Activated naive CD4-positive, alpha-beta T cell treated with anti-CD3 and anti-CD28 coated beads for 36 hours (primary cell): ENCODE measurements at regions of chr12 and their contacts with region 1.

Region 1: GRCh38 chr12:110431957-110432587 is 18.1 kb downstream of the ARPC3 start:
- DNase-seq: peak; percentile 31
- H3K4me3 Mint-ChIP-seq: no peak overlapping the region
- H3K27ac Mint-ChIP-seq: peak overlapping the region; percentile 36
- H3K4me1 Mint-ChIP-seq: peaks cover 3% of the 10 kb centered on the region
- H3K27me3 Mint-ChIP-seq: no peaks in the 10 kb centered on the region

Region 2: DNA sequence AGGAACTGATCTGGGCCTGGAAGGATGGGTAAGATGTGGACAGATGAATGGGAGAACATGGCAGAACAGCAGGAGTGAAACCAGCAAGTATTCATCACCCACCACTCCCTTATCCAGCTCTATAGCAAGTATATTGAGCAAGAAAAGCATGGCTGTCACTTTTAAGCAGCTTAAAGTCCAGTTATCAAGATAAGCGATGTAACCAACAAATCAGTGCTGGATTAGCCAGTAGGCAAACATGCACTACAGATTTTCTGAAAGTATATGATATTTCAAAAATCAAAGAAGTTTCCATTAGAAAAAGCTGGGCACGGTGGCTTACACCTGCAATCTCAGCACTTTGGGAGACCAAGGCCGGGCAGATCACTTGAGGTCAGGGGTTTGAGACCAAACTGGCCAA is 204.9 kb before region 1 on chr12:
- CTCF ChIA-PET with region 1: no interaction called
- intact Hi-C with region 1: no loop called
- DNase-seq: no peak
- H3K4me3 Mint-ChIP-seq: no peak overlapping the region
- H3K27ac Mint-ChIP-seq: no peak overlapping the region
- H3K4me1 Mint-ChIP-seq: no peaks in the 10 kb centered on the region
- H3K27me3 Mint-ChIP-seq: peaks cover 4% of the 10 kb centered on the region

Region 3: GRCh38 chr12:110254971-110255540 is 177.0 kb before region 1 on chr12:
- CTCF ChIA-PET with region 1: interaction called, 12 read pairs
- intact Hi-C with region 1: no loop called
- DNase-seq: no peak
- H3K4me3 Mint-ChIP-seq: no peak overlapping the region
- H3K27ac Mint-ChIP-seq: no peak overlapping the region
- H3K4me1 Mint-ChIP-seq: no peaks in the 10 kb centered on the region
- H3K27me3 Mint-ChIP-seq: no peaks in the 10 kb centered on the region

Region 4: DNA sequence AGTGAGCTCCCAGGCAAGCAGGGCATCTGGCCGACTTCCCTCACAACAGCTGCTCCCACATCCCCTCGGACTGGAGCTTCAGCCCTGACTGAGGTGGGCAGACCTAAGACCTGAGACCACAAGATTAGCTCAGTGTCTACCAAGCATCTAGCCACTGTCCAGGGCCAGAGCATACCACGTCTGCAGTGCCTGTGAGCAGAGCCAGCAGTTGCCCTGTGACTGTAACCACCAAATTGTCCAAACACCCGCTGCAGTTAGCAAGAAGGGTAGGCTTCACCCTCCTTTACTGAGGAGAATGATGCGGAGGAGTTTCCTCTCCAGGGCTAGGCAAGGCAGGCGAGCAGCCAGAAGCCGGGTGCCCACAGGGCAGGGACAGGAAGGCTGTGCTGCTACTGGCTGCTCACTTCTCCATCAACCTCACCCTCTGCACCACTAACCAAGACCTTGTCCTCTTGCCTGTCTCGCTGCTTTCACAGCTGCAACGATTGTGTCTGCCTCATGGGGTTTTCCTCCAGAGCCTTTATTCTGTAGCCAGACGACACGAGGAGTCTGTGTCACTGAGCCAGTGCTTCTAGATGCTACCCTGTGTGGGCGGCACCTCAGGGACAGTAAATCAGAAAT is 82.4 kb before region 1 on chr12:
- CTCF ChIA-PET with region 1: interaction called, 30 read pairs
- intact Hi-C with region 1: no loop called
- DNase-seq: peak; percentile 78
- H3K4me3 Mint-ChIP-seq: no peak overlapping the region
- H3K27ac Mint-ChIP-seq: peak overlapping the region; percentile 69
- H3K4me1 Mint-ChIP-seq: peaks cover 35% of the 10 kb centered on the region
- H3K27me3 Mint-ChIP-seq: peaks cover 2% of the 10 kb centered on the region

Region 5: DNA sequence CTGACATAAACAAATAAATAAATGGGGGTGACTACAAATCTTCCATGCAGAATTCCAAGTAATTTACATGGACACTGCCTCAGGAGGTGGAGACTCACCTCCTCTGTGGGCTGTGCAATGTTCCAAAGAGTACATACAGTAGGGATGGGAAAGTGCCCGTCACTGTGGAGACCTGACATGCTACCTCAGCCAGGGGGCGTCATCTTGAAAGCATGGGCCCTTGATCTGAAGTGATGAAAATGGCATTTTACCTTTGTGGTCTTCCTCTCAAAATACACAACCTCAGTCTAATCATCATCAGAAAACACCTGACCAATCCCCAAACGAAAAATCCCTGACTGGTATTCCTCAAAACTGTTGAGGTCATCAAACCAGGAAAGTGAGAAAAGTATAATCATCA is 77.0 kb before region 1 on chr12:
- CTCF ChIA-PET with region 1: interaction called, 30 read pairs
- intact Hi-C with region 1: loop called (anchors 1 kb)
- DNase-seq: peak; percentile 59
- H3K4me3 Mint-ChIP-seq: no peak overlapping the region
- H3K27ac Mint-ChIP-seq: no peak overlapping the region
- H3K4me1 Mint-ChIP-seq: peaks cover 13% of the 10 kb centered on the region
- H3K27me3 Mint-ChIP-seq: peaks cover 2% of the 10 kb centered on the region

Region 6: DNA sequence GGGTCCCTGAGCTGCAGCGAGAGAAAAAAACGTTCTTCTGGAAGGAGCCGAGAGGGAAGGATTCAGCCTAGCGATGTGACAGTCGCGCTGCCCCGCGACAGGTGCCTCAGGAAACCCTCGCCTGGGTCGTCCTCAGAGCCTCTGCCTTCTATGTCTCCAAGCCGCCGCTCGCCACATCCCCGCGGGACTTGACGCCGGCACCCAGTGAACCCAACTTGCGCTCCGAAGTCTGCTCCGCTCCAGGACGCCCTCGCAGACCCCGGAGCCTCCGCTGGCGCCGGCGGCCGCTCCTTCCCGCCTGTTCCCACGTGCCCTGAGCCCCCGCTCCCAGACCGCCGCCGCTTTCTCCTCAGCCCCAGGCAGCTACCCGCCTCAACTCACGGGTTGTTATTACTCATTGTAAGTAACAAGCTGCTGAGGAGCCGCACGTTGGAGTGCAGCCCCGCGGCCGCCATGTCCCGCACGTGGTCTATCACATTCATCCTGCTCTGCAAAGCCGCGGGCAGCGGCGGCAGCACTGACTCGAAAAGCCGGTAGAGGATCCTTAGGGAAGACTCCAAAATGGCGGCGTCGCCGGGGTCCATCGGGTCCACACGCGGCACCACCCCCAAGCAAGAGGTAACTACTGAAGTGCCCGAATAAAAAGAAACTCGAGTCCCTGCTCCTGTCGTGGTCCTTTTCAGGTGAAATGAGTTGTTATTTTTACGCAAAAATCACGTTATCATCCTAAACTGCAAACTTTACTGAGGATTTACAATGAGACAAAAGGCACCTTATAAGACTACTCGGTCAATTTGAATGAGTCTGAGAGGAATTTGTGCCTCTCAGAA is 28.7 kb before region 1 on chr12 and contains the start of gene ANAPC7:
- CTCF ChIA-PET with region 1: interaction called, 12 read pairs
- intact Hi-C with region 1: loop called (anchors 1 kb)
- DNase-seq: peak; percentile 92
- H3K4me3 Mint-ChIP-seq: peak within 1 kb of the TSS; percentile 98
- H3K27ac Mint-ChIP-seq: peak within 1 kb of the TSS; percentile 99
- H3K4me1 Mint-ChIP-seq: peaks cover 27% of the 10 kb centered on the region
- H3K27me3 Mint-ChIP-seq: no peaks in the 10 kb centered on the region
- total RNA-seq, gene ANAPC7: 51.2 to 61.2 TPM

Region 7: DNA sequence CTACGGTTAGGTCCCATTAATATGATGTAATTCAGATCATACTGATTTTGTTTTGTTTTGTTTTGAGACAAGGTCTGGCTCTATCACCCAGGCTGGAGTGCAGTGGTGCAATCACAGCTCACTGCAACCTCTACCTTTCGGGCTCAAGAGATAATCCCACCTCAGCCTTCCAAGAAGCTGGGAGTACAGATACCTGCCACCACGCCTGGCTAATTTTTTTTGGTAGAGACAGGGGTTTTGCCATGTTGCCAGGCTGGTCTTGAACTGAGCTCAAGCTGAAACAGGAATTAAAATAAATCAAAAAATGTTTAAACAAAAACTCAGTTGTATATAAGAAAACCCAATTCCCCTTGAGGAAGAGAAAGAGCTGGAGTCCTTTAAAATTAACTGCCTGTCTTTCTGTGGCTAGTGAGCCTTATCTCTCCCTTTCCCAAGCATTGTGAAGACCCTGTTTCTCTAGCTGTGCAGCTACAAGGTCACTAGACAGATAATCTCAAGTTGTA is 10.9 kb before region 1 on chr12:
- CTCF ChIA-PET with region 1: interaction called, 17 read pairs
- intact Hi-C with region 1: no loop called
- DNase-seq: no peak
- H3K4me3 Mint-ChIP-seq: no peak overlapping the region
- H3K27ac Mint-ChIP-seq: no peak overlapping the region
- H3K4me1 Mint-ChIP-seq: no peaks in the 10 kb centered on the region
- H3K27me3 Mint-ChIP-seq: no peaks in the 10 kb centered on the region

Region 8: GRCh38 chr12:110590806-110591326 is 158.8 kb after region 1 on chr12:
- CTCF ChIA-PET with region 1: no interaction called
- intact Hi-C with region 1: no loop called
- DNase-seq: no peak
- H3K4me3 Mint-ChIP-seq: peak overlapping the region; percentile 21
- H3K27ac Mint-ChIP-seq: peak overlapping the region; percentile 90
- H3K4me1 Mint-ChIP-seq: peaks cover 31% of the 10 kb centered on the region
- H3K27me3 Mint-ChIP-seq: no peaks in the 10 kb centered on the region

Region 9: GRCh38 chr12:110613771-110614684 is 182.0 kb after region 1 on chr12 and contains the start of gene TCTN1:
- CTCF ChIA-PET with region 1: no interaction called
- intact Hi-C with region 1: no loop called
- DNase-seq: peak; percentile 98
- H3K4me3 Mint-ChIP-seq: peak within 1 kb of the TSS; percentile 84
- H3K27ac Mint-ChIP-seq: peak within 1 kb of the TSS; percentile 84
- H3K4me1 Mint-ChIP-seq: peaks cover 13% of the 10 kb centered on the region
- H3K27me3 Mint-ChIP-seq: no peaks in the 10 kb centered on the region
- total RNA-seq, gene TCTN1: 5.2 to 5.8 TPM